Right ventricle myocardium superior (tissue), 1 donor: ENCODE measurements at regions of chrX and their contacts with region 1.

Region 1: GRCh38 chrX:103464774-103465117 is 54.5 kb downstream of the RAB40A start:
- DNase-seq: peak; percentile 62
- ATAC-seq: peak; percentile 93

Region 2: GRCh38 chrX:103214870-103215424 is 249.8 kb before region 1 on chrX and contains the start of gene BEX4:
- intact Hi-C with region 1: loop called (anchors 10 kb)
- DNase-seq: peak; percentile 90
- ATAC-seq: peak; percentile 99
- total RNA-seq, gene BEX4: 30.5 TPM

Region 3: DNA sequence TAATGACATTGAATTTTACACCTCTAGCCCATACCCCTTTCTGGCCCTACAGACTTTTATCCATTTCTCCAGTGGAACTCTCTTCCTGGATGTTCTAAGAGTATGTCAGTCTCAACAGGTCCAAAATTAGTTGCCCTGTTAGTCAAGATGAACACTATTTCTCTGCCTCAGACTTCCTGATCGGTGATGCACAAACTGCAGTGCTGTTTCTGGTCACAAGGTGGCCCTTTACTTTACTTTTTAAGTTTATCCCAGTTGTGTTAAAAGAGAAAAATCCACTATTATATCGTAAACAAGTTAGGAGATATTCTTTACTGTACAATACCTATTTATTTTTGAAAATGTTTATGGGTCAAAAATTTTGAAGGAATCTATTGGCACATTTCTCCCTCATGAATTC is 121.6 kb before region 1 on chrX:
- intact Hi-C with region 1: loop called (anchors 5 kb)
- DNase-seq: no peak
- ATAC-seq: no peak

Region 4: DNA sequence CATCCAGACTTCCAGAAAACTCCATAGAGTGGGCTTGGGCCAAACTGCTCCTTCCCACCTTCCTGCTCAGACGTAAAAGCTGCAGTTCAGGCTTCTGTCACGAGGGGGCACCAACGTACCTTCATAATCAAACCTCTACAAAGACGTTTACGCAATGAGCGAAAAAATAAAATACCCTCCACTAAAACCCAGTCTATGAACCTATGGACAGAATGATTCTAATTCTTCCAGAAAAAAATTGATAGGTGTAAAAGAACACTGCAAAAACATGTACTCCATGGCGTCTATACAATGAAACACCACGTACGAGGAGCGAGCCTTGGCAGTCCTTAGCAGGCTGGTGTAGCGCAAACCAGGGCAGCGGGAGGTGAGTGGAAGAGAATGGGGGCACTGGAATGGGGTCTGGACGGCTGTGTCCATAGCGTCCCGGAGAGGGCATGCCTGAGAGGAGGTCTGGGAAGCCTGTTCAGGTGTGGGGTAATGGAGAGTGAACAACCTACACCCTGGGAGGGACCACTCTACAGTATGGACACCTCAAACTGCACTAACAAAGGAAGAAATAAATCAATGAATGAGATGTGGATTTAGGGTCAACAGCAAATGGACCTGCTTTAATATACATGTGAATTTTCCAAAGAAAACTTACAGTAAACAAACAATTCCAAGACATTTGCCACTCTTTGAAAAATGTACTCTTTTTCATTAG is 68.9 kb after region 1 on chrX:
- intact Hi-C with region 1: no loop called
- DNase-seq: peak; percentile 80
- ATAC-seq: peak; percentile 87